ENCODE measurements at regions of chr1 and their contacts with region 1.

Region 1: DNA sequence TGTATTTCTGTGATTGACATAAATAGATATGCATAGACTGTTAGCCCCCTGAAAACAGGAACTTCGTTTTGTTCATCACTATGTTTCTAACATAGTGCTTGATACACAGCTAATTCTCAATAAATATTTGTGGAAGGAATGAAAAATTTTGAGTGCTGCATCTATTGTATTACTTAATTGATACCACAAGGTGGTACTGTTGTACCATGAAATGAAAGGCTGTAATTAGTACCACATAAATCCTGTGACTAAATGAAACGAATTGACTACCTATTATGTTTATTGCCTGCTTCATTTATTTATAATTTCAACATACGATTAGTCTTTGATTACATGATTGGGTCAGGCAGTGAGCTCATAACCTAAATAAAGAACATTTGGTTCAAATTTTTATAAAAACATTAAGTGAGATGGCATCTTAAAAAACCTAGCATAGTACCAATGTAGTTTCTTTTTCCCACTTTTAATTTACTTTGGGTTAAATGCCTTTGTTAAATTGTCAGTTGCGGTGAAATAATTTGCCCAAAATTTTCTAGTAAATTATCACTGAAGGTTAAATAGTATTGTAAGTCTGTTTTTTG is 15.0 kb upstream of the TGFB2 start:
- DNase-seq: no peak

Region 2: GRCh38 chr1:218312509-218312908 is 17.6 kb before region 1 on chr1:
- intact Hi-C with region 1: no loop called
- DNase-seq: no peak

Region 3: DNA sequence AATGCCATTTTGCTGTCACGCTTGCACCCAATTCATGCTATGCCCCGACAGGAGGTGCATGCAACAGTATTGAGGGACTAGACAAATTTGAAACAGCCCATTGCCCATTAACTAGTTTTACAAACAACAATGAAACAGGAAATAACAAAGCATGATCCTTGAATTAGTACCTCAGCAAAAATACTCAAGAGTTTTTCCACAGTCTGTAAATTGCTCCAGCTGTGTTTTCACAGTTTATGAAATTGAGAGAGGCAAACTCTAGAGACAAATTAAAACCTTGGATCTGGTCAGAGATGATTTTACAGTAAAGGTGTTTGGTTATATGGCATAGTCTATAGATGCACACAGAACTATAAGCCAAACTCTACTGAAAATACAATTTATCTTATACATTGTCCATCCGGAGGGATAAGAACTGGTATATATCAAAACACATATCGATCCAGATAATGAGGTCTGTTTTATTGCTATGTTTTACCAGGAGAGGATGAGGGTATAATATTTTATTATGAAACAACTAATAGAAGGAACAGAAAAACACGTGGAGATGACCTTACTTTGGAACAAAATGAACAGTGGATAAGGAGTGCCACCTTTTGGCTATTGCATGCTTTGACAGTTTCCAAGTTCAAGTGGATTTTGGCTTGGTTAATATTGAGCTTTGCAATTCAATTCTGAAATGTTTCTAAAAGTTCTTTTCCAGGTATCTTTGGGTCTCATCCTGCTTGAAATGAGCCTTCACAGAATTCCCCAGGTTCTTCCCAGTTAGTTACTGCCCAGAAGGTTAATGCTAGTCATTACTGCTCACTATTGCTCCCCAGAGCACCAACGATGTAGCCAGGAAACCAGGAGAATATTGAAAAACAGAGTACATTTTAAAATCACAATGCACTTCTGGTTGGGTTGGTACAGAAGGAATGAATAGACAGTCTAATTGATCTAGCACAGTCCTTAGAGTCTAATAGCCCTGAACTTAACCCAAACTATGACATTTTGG is 1237.1 kb after region 1 on chr1:
- intact Hi-C with region 1: loop called (anchors 10 kb)
- DNase-seq: no peak